Heart right ventricle (tissue), 16 donors: ENCODE measurements at regions of chr17 and their contacts with region 1.

Region 1: DNA sequence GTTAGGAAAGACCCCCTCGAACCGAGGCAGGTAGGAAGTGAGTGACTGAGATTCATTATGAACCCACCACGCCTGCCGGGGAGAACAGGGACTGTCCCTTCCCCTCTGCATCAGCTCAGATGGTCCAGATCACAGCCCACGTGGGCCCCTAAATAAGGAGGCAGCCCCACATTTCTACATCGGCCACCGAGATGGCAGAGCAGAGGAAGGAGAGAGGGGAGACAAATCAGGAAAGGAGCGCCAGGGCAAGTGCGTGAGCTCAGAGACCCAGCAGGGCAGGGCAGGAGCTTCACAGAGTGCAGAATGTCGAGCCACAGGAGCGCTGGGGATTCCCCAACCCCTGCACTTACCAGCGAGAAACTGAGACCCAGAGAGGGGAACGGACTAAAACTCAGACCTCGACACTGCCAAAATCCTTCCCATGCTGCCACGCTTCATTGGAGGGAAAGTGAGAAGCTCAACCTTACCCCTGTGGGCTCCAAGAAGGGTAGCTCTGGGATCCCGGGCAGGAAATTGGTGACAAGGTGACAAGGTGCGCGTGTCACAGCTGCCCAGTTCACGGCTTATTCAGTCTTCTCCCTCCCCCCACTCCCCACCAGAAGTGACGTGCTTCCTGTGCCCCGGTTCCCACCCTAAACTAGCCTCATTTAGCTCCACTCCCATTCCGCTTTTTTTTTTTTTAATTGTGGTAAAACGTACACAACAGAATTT is at the start of gene ICAM2:
- DNase-seq: peak; percentile 63 to 85
- ATAC-seq: peak; percentile 85 to 96 (median 93)
- H3K4me3 ChIP-seq: peak within 1 kb of the TSS; percentile 23 to 70 (median 58)
- H3K27ac ChIP-seq: peak within 1 kb of the TSS; percentile 75 to 97 (median 86)
- H3K4me1 ChIP-seq: peaks cover 0 to 62% (median 26%) of the 10 kb centered on the region in 9 donors
- H3K27me3 ChIP-seq: no peaks in the 10 kb centered on the region
- CTCF ChIP-seq: no peak
- total RNA-seq, gene ICAM2: 25.2 to 70.2 (median 32.4) TPM

Region 2: DNA sequence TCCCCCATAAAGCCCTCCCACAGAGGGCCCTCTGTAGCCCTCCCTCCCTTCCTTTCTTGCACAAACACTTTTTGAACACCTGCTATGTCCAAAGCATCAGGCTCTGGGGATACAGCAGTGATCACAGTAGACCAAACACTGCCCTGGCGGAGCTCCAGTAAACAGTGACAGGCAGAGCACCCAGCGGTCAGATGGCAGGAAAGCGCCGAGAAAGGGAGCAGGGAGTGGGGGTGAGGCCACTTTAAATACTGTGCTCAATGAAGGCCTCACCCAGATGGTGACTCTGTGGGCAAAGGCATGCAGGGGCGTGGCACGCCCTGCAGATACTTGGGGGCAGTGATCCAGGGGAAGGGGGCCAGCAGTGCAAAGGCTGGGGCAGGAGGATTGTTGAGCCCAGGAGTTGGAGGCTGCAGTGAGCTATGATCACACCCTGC is 14.5 kb before region 1 on chr17:
- intact Hi-C with region 1: loop called in 1 of 10 experiments (anchors 2 kb)
- DNase-seq: no peak
- ATAC-seq: peak in 2 of 8 donors; percentile 4
- H3K4me3 ChIP-seq: peak overlapping the region; percentile 18 to 59 (median 45)
- H3K27ac ChIP-seq: peak overlapping the region; percentile 65 to 90 (median 84)
- H3K4me1 ChIP-seq: peaks cover 2 to 85% (median 65%) of the 10 kb centered on the region in 9 donors
- H3K27me3 ChIP-seq: no peaks in the 10 kb centered on the region
- CTCF ChIP-seq: no peak

Region 3: DNA sequence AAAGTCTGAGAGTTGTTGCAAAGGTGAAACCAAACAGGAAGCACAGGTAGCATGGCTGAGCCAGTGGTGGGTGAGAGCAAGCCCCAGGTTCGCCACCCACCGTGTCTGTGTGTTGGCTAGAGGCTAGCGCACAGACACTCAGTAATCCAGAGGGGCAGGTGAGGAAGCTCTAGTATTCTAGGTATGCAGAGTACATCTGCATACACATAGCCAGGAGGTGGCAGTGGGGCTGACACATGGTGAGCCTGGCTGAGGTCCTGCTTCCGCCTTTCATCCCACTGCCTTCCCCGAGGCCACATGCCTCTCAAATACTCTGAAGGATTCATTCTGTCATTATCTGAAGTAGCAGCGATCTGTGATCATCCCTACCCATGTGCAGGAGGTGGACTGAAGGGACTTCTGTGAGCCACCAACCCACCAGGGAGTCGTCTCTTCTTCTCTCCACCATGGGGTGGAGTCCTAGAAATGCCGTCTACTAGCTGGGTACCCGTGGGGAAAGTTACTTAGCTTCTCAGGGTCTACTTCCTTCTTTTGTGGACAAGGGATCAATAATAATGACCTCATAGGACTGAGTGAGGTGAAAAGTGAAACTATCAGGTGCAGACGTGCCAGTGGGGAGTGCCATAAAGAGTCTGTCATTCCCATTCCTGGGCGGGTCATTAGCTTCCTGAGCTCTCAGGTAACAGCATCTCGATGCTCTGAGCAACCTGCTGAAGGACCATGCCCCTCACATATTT is 36.2 kb after region 1 on chr17:
- intact Hi-C with region 1: no loop called
- DNase-seq: no peak
- ATAC-seq: no peak
- H3K4me3 ChIP-seq: no peak overlapping the region
- H3K27ac ChIP-seq: peak overlapping the region in 1 of 10 donors; percentile 47
- H3K4me1 ChIP-seq: peaks cover 0 to 13% (median 0%) of the 10 kb centered on the region in 9 donors
- H3K27me3 ChIP-seq: no peaks in the 10 kb centered on the region
- CTCF ChIP-seq: no peak

Region 4: GRCh38 chr17:64174686-64175456 is 154.7 kb after region 1 on chr17:
- intact Hi-C with region 1: no loop called
- DNase-seq: no peak
- ATAC-seq: peak; percentile 40 to 73 (median 45)
- H3K4me3 ChIP-seq: no peak overlapping the region
- H3K27ac ChIP-seq: peak overlapping the region in 8 of 10 donors; percentile 54 to 82 (median 68)
- H3K4me1 ChIP-seq: peaks cover 0 to 79% (median 54%) of the 10 kb centered on the region in 9 donors
- H3K27me3 ChIP-seq: no peaks in the 10 kb centered on the region
- CTCF ChIP-seq: no peak